ENCODE measurements at regions of chr1 and their contacts with region 1.

Region 1: DNA sequence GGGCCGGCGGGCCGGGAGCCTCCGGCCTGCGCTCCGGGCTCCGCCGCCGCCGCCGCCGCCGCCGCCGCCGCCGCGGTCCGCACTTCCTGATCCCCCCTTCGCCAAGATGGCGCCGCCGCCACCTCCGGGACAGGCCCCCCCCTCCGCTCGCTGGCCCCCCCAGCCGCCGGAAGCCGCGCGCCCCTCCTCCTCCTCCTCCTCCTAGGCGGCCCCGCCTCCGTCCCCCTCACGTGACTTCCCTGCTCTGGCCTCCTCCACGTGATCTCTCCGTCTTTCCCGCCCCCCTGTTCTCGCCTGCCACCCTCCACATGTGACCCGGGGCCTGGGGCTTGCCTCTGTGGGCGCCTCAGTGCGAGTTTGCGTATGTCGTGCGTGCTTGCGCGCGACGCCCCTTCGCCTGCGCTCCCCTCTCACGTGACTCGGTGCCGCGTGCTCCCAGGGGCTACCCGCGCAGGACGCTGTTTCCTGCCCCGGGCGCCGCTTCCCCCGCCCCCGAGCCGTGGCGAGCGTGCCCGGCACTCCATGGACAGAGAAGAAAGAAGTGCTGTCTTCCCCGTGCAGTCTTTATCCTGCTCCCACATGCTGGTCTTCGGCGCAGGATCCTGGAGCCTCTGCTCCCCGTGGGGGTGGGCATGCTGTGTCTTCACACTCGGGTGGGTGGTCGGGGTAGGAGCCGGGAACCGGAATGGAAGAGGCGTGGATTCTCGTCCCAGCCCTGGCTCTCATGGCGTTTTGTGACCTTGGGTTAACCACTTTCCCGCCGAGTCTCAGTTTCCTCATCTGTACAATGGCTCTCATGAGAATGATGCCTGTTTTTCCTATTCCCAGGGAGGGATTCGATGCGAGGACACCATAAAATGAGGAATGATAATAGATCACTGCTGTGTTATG is at the start of gene UBE2Q1:
- DNase-seq: peak; percentile 98 to 100 (median 99)
- ATAC-seq: peak; percentile 90 to 96 (median 94)
- H3K4me3 ChIP-seq: peak within 1 kb of the TSS; percentile 88 to 91 (median 89)
- H3K27ac ChIP-seq: peak within 1 kb of the TSS; percentile 74 to 93 (median 89)
- H3K4me1 ChIP-seq: peaks cover 8 to 12% (median 12%) of the 10 kb centered on the region in 3 donors
- H3K27me3 ChIP-seq: no peaks in the 10 kb centered on the region
- CTCF ChIP-seq: no peak
- total RNA-seq, gene UBE2Q1: 32.9 to 52.2 (median 38.9) TPM

Region 2: DNA sequence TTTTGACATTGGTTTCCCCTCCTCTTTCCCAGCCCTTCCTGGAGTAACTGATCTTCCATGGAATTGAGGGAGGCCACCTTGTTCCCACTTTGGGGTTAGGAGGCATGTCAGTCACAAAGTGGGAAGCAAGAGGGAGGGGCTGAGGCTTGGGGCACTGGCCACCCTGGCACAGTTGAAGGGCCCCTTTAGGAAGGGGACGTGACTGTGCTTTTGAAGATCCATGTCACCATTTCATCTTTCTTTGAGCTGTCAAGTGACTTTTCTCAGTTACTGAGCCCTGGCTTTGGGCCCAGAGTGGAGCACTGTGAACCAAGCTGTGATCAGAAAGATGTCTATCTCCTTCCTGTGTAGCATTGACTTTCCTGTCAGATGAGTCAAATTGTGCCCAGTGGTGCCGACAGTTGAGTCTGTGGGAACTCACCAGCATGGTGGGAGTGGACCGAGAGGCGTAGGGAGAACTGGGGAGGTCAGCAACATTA is 95.3 kb before region 1 on chr1:
- intact Hi-C with region 1: no loop called
- DNase-seq: peak in 1 of 6 donors; percentile 13
- ATAC-seq: peak in 2 of 4 donors; percentile 31 to 39
- H3K4me3 ChIP-seq: no peak overlapping the region
- H3K27ac ChIP-seq: no peak overlapping the region
- H3K4me1 ChIP-seq: no peaks in the 10 kb centered on the region
- H3K27me3 ChIP-seq: no peaks in the 10 kb centered on the region
- CTCF ChIP-seq: no peak

Region 3: GRCh38 chr1:154751690-154752089 is 192.9 kb after region 1 on chr1:
- intact Hi-C with region 1: loop called in 1 of 3 experiments (anchors 10 kb)
- DNase-seq: no peak
- ATAC-seq: peak in 3 of 4 donors; percentile 38 to 74 (median 53)
- H3K4me3 ChIP-seq: no peak overlapping the region
- H3K27ac ChIP-seq: no peak overlapping the region
- H3K4me1 ChIP-seq: no peaks in the 10 kb centered on the region
- H3K27me3 ChIP-seq: peaks cover 0 to 4% (median 0%) of the 10 kb centered on the region in 4 donors
- CTCF ChIP-seq: no peak

Region 4: GRCh38 chr1:154884869-154885701 is 326.3 kb after region 1 on chr1:
- intact Hi-C with region 1: loop called in 2 of 3 experiments (anchors 10 kb)
- DNase-seq: no peak
- ATAC-seq: no peak
- H3K4me3 ChIP-seq: no peak overlapping the region
- H3K27ac ChIP-seq: no peak overlapping the region
- H3K4me1 ChIP-seq: no peaks in the 10 kb centered on the region
- H3K27me3 ChIP-seq: no peaks in the 10 kb centered on the region
- CTCF ChIP-seq: no peak